ENCODE measurements at regions of chr19 and their contacts with region 1.

Region 1: GRCh38 chr19:50777754-50778303 is 7.6 kb downstream of the GPR32 start:
- DNase-seq: no peak
- H3K4me3 Mint-ChIP-seq: no peak overlapping the region
- H3K27ac Mint-ChIP-seq: no peak overlapping the region
- H3K4me1 Mint-ChIP-seq: peaks cover 6% of the 10 kb centered on the region
- H3K27me3 Mint-ChIP-seq: peaks cover 47% of the 10 kb centered on the region
- CTCF ChIP-seq: no peak

Region 2: GRCh38 chr19:50357178-50358100 is 420.4 kb before region 1 on chr19:
- CTCF ChIA-PET with region 1: interaction called, 14 read pairs
- POLR2A ChIA-PET with region 1: interaction called, 3 read pairs
- intact Hi-C with region 1: no loop called
- DNase-seq: peak; percentile 61
- H3K4me3 Mint-ChIP-seq: peak overlapping the region; percentile 67
- H3K27ac Mint-ChIP-seq: no peak overlapping the region
- H3K4me1 Mint-ChIP-seq: no peaks in the 10 kb centered on the region
- H3K27me3 Mint-ChIP-seq: no peaks in the 10 kb centered on the region
- CTCF ChIP-seq: peak; percentile 87

Region 3: DNA sequence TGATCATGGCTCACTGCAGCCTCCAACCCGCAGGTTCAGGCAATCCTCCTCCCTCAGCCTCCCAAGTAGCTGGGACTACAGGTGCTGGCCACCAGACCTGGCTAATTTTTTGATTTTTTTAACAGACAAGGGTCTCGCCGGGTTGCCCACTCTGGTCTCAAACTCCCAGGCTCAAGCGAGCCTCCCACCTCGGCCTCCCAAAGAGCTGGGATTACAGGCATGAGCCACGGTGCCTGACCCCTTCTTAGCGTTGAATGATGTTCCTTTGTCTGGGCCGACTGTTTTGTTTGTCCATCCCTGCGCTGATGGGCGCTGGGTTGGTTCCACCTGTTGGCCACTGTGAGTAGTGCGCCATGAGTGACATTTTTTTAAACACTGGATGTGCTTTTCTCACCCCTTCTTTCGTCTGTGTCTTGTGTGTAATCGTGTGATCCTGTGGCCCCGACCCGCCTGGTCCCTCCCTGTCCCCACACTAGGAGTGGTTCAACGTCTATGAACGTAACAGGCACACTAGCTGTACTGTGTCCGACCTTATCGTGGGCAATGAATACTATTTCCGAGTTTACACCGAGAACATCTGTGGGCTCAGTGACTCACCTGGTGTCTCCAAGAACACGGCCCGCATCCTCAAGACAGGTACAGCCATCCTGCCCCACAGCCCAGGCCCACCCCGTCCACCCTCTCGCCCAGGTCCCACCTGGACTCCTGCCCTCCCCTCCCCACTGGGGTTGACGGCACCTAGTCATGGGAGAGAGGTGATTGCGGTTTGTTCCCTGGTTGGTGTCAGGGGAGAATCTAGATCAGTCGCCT is 316.6 kb before region 1 on chr19:
- CTCF ChIA-PET with region 1: no interaction called
- POLR2A ChIA-PET with region 1: no interaction called
- intact Hi-C with region 1: loop called (anchors 2 kb)
- DNase-seq: peak; percentile 78
- H3K4me3 Mint-ChIP-seq: no peak overlapping the region
- H3K27ac Mint-ChIP-seq: no peak overlapping the region
- H3K4me1 Mint-ChIP-seq: no peaks in the 10 kb centered on the region
- H3K27me3 Mint-ChIP-seq: peaks cover 14% of the 10 kb centered on the region
- CTCF ChIP-seq: peak; percentile 81

Region 4: DNA sequence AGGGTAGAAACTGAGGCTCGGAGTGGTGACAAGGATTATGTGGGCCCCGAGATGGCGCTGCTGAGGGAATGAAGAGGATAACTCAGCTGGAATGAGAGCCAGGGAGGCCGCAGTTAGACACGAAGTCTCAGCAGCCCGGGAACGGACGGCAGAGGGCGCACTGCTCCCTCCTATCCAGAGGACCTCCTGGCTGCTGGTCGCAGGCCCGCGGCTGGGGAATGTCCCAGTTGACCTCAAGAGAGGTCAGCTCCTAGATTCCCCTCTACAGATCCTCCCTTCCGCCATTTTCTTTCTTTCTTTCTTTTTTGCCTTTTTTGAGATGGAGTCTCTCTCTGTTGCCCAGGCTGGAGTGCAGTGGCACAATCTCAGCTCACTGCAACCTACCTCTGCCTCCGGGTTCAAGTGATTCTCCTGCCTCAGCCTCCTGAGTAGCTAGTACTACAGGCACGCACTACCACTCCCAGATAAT is 240.0 kb before region 1 on chr19:
- CTCF ChIA-PET with region 1: interaction called, 15 read pairs
- POLR2A ChIA-PET with region 1: no interaction called
- intact Hi-C with region 1: loop called (anchors 1 kb)
- DNase-seq: peak; percentile 73
- H3K4me3 Mint-ChIP-seq: no peak overlapping the region
- H3K27ac Mint-ChIP-seq: no peak overlapping the region
- H3K4me1 Mint-ChIP-seq: no peaks in the 10 kb centered on the region
- H3K27me3 Mint-ChIP-seq: no peaks in the 10 kb centered on the region
- CTCF ChIP-seq: peak; percentile 72

Region 5: GRCh38 chr19:50705422-50706019 is 72.3 kb before region 1 on chr19:
- CTCF ChIA-PET with region 1: interaction called, 3 read pairs
- POLR2A ChIA-PET with region 1: no interaction called
- intact Hi-C with region 1: loop called (anchors 1 kb)
- DNase-seq: peak; percentile 61
- H3K4me3 Mint-ChIP-seq: no peak overlapping the region
- H3K27ac Mint-ChIP-seq: no peak overlapping the region
- H3K4me1 Mint-ChIP-seq: peaks cover 5% of the 10 kb centered on the region
- H3K27me3 Mint-ChIP-seq: peaks cover 26% of the 10 kb centered on the region
- CTCF ChIP-seq: peak; percentile 53

Region 6: GRCh38 chr19:50815439-50815838 is 37.6 kb after region 1 on chr19:
- CTCF ChIA-PET with region 1: no interaction called
- POLR2A ChIA-PET with region 1: no interaction called
- intact Hi-C with region 1: no loop called
- DNase-seq: no peak
- H3K4me3 Mint-ChIP-seq: no peak overlapping the region
- H3K27ac Mint-ChIP-seq: no peak overlapping the region
- H3K4me1 Mint-ChIP-seq: peaks cover 3% of the 10 kb centered on the region
- H3K27me3 Mint-ChIP-seq: peaks cover 12% of the 10 kb centered on the region
- CTCF ChIP-seq: no peak

Region 7: GRCh38 chr19:50912727-50913716 is 135.2 kb after region 1 on chr19:
- CTCF ChIA-PET with region 1: no interaction called
- POLR2A ChIA-PET with region 1: no interaction called
- intact Hi-C with region 1: no loop called
- DNase-seq: no peak
- H3K4me3 Mint-ChIP-seq: no peak overlapping the region
- H3K27ac Mint-ChIP-seq: no peak overlapping the region
- H3K4me1 Mint-ChIP-seq: no peaks in the 10 kb centered on the region
- H3K27me3 Mint-ChIP-seq: peaks cover 6% of the 10 kb centered on the region
- CTCF ChIP-seq: no peak